PC-9 (cell line): ENCODE measurements at regions of chr14 and their contacts with region 1.

Region 1: DNA sequence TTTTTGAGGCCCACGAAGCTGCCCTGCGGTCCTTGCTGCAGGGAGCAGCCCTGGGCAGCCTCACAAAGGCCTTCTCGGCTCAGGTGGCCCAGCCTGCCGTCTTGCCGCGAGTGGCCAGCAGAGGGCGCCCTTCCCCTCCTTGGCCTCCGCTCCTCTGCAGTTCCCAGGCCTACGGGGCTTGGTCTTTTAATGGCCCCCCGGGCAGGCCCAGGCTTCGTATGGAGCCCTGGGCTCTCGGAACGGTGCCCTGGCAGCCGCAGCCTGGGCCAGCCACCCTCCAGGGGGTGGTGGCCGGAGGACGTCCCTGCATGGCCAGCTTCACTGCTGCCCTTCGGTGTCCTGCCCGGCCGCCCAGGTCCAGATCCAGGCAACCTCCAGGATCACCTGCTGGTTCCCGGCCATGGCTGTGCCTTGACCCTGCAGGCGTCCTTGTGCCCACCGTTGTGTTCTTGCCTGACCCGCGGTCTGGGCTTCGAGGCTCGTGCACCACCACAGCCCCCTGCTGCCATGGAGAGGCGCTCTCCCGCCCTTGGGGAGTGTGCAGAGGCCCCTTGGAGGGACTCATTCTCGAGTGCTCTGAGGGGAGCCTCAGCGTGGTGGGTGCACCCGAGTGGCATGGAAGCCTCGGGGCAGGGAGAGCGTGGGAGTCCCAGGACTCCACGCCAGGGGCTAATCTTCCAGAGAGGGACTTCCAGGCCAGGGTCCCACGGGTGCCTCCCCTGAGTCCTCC is 9.4 kb downstream of the ASPG start:
- DNase-seq: peak in 1 of 2 experiments; percentile 76
- H3K4me3 ChIP-seq: no peak overlapping the region
- H3K27ac ChIP-seq: no peak overlapping the region
- H3K4me1 ChIP-seq: no peaks in the 10 kb centered on the region
- H3K27me3 ChIP-seq: peaks cover 8% of the 10 kb centered on the region; the same call in 1 of the 2 replicates
- CTCF ChIP-seq: peak; percentile 91

Region 2: GRCh38 chr14:104016873-104017650 is 77.8 kb before region 1 on chr14:
- CTCF ChIA-PET with region 1: no interaction called
- POLR2A ChIA-PET with region 1: no interaction called
- intact Hi-C with region 1: no loop called
- DNase-seq: no peak
- H3K4me3 ChIP-seq: no peak overlapping the region
- H3K27ac ChIP-seq: no peak overlapping the region
- H3K4me1 ChIP-seq: peaks cover 10% of the 10 kb centered on the region
- H3K27me3 ChIP-seq: no peaks in the 10 kb centered on the region
- CTCF ChIP-seq: no peak

Region 3: DNA sequence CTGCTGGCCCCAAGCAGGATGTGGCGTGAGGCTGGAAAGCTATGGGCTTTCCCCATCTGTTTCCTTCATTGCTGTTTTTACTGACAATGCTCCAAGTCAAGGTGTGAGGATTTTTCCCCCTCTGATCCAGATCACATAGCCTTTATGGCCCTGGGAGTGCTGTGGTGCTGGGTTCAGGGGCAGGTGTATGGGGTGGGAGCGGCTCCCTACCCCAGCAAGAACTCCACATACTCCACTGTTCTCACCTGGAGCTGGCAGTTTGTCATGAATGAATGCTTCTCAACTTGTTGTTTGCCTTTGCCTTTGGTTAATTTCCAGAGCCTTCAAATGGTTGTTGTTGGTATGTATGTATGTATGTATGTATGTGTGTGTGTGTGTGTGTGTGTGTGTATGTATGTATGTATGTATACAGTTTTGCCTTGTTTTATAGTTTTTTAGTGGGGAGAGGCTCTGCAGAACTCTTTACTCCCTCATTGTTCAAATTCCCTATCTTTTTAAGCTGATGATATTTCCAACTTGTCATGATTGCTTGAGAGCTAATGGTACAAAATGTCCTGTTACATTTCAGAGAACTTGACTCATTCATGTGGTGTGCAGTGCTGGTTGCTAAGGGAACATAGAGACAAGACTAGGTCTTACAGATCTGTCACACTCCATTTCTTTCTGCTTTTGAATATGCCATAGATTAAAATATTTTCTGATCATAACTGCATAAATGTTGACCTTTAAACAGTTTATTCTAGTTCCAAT is 45.9 kb before region 1 on chr14:
- CTCF ChIA-PET with region 1: interaction called, 11 read pairs
- POLR2A ChIA-PET with region 1: no interaction called
- intact Hi-C with region 1: no loop called
- DNase-seq: no peak
- H3K4me3 ChIP-seq: no peak overlapping the region
- H3K27ac ChIP-seq: no peak overlapping the region
- H3K4me1 ChIP-seq: no peaks in the 10 kb centered on the region
- H3K27me3 ChIP-seq: peaks cover 25% of the 10 kb centered on the region
- CTCF ChIP-seq: no peak

Region 4: DNA sequence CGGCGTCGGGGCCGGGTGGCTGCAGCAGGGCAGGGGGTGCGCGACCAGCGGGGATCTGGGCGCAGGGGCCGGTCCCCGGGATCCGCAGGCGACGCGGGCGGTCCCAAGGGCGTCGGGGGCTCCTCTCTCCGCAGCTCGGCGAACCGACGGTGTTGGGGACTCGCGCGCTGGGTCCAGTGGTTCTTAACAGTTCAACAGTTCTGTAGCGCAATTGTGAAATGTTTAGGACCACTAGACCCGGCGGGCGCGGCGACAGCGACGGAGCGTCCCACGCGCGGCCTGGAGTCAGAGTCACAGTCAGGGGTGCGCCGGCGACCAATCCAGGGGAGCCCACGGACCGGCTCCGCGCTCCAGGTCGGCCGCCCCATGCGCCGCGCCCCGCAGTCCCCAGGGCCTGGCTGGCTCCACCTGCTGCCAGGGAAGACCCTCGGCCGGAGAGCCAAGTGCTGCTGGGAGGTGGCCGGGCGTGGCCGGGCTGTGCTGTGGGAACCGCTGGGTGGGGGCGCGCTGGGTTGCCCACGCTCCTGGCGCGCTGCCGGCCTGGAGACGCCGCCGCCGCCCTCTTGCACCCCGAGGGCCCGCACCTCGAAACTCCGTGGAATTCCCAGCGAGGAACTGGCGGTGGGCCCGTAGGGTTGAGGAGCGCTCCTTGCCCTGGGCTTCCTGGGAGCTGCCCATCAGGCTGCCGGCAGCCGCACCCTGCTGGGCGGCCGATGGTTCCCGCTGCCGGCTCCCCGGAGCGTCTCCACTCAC is 22.6 kb after region 1 on chr14:
- CTCF ChIA-PET with region 1: interaction called, 10 read pairs
- POLR2A ChIA-PET with region 1: no interaction called
- intact Hi-C with region 1: no loop called
- DNase-seq: no peak
- H3K4me3 ChIP-seq: peak overlapping the region; percentile 92; the same call in 1 of the 2 replicates
- H3K27ac ChIP-seq: no peak overlapping the region
- H3K4me1 ChIP-seq: peaks cover 7% of the 10 kb centered on the region
- H3K27me3 ChIP-seq: peaks cover 14% of the 10 kb centered on the region
- CTCF ChIP-seq: no peak

Region 5: DNA sequence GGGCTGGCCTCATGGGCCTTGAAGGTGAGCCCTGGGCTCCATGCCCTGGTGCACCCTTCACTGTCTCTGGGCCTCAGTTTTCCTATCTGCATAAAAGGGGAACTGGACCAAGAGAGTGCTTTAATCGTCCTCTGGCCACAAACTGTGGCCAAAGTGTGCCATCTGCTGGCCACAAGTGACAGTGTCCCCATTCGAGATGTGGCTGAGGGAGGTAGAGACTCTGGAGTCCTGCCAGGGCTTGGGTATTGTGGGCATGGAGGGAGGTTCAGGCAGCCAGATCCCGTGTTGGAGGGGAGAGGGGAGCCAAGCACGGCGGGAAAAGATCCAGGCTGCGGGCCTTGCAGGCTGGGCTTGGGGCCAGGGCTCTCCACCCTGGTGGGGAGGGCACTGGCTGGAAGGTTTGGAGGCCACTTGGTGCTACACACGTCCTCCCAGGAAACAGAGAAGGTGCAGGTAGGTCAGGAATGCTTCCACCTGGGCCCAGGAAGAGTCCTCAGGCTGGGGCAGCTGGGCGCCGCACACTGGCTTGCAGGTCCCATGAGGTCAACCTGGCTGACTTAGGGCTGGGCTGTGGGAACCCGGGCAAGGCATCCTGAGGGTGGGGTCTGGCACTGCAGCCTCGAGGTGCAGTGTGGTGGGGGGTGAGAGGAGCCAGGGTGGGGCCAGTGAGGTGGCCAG is 36.2 kb after region 1 on chr14:
- CTCF ChIA-PET with region 1: interaction called, 4 read pairs
- POLR2A ChIA-PET with region 1: no interaction called
- intact Hi-C with region 1: loop called (anchors 1 kb)
- DNase-seq: peak; percentile 45 to 48
- H3K4me3 ChIP-seq: no peak overlapping the region
- H3K27ac ChIP-seq: no peak overlapping the region
- H3K4me1 ChIP-seq: no peaks in the 10 kb centered on the region
- H3K27me3 ChIP-seq: peaks cover 19% of the 10 kb centered on the region; the same call in 1 of the 2 replicates
- CTCF ChIP-seq: peak; percentile 90

Region 6: DNA sequence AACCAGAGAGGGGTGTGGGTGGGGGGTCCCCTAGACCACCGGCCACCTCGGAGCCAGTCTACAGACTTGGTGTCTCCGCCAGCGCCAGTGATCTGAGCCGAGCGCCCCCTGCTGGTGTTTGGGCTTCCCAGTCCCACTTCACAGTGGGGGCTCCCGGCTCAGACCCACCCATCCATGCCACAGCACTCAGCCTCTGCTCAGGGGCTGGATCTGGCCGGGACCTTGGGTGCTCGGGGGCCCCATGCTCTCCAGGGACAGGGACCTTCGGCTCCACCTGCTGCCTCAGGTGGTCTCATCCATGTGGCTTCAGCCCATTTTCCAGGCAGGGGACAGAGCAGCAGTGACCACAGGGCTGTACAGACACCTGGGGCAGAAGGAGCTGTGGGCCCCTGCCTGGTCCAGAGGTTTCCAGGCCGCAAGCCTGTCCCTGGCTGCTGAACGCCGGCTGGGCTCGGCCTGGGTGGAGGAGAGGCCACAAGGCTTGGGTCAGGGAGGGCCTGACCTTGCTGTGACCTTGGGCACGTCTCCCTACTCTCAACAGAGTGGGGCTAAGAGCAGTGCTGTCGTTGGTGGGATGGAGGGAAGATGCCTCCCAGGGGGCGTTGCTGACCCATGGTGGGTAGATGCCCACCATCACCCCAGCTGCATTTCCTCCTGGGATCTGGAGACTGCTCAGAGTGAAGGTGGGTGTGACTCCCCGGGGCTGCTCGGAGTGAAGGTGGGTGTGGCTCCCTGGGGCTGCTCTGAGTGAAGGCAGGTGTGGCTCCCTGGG is 129.8 kb after region 1 on chr14:
- CTCF ChIA-PET with region 1: no interaction called
- POLR2A ChIA-PET with region 1: interaction called, 18 read pairs
- intact Hi-C with region 1: no loop called
- DNase-seq: no peak
- H3K4me3 ChIP-seq: no peak overlapping the region
- H3K27ac ChIP-seq: no peak overlapping the region
- H3K4me1 ChIP-seq: no peaks in the 10 kb centered on the region
- H3K27me3 ChIP-seq: peaks cover 39% of the 10 kb centered on the region
- CTCF ChIP-seq: no peak; the same call in 1 of the 2 replicates